HepG2 (cell line): ENCODE measurements at regions of chr6 and their contacts with region 1.

Region 1: GRCh38 chr6:27893059-27893835 is 18.9 kb downstream of the OR2B2 start:
- DNase-seq: peak; percentile 99
- ATAC-seq: peak; percentile 70
- H3K4me3 ChIP-seq: peak overlapping the region; percentile 76 to 85 (median 82)
- H3K27ac ChIP-seq: peak overlapping the region; percentile 96
- H3K4me1 ChIP-seq: peaks cover 45% of the 10 kb centered on the region
- H3K27me3 ChIP-seq: no peaks in the 10 kb centered on the region; a peak in 1 of 5 replicates
- CTCF ChIP-seq: peak; percentile 39; the same call in 1 of the 2 replicates
- EP300 ChIP-seq: peak; percentile 41 to 53; a peak in 2 of 4 replicates
- POLR2A ChIP-seq: peak; percentile 98 to 99
- RAD21 ChIP-seq: peak; percentile 52; the same call in 1 of the 2 replicates

Region 2: GRCh38 chr6:26196846-26197648 is 1696.2 kb before region 1 on chr6:
- CTCF ChIA-PET with region 1: no interaction called
- POLR2A ChIA-PET with region 1: interaction called, 7 read pairs
- in situ Hi-C with region 1: no loop called
- intact Hi-C with region 1: loop called (anchors 10 kb)
- DNase-seq: peak; percentile 93
- ATAC-seq: peak; percentile 66
- H3K4me3 ChIP-seq: peak overlapping the region; percentile 81 to 90 (median 87)
- H3K27ac ChIP-seq: peak overlapping the region; percentile 94
- H3K4me1 ChIP-seq: peaks cover 30% of the 10 kb centered on the region
- H3K27me3 ChIP-seq: no peaks in the 10 kb centered on the region; a peak in 1 of 5 replicates
- CTCF ChIP-seq: peak; percentile 60
- EP300 ChIP-seq: peak; percentile 34 to 41; a peak in 2 of 4 replicates
- POLR2A ChIP-seq: peak; percentile 99
- RAD21 ChIP-seq: peak; percentile 53

Region 3: DNA sequence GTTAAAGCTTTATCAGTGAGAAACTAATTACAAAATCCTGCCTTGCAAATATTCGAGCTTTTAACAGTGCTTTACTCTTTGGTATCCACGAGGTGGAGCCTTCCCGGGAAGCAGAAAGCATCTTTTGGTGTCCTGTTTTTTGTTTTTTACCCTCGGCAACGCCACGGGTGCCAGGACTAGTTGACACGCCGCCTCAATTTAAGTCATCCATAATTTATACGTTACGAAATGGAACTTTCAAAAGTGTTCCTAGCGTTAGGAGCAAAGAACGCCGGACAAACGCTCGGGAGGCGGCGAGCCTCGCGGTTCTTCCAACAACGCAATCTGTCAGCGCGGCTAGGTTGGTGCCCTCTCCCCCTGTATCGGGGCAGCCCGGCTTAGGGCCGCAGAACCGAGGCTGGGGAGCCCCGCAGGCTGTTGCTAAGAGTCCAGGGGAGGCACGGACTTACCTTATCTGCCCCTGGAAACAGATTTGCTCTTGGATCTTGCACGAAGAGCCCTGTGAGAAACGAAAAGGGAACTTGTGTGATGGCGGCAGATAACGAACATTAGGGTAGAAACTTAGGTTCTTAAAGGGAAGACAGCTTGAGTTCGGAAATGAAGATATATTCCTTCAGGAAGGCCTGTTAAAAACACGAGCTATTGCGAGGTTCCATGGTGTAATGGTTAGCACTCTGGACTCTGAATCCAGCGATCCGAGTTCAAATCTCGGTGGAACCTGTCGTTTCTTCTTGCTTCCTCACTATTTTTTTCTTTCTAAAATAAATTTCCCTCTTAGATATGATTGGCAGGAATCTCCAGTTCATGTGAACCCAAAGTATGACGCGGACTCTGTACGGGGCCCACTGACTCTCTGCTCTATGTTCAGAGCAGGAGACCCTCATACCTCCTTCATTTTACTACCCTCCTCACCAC is 374.1 kb before region 1 on chr6:
- CTCF ChIA-PET with region 1: no interaction called
- POLR2A ChIA-PET with region 1: interaction called, 3 read pairs
- in situ Hi-C with region 1: loop called (anchors 10 kb)
- intact Hi-C with region 1: loop called (anchors 2 kb)
- DNase-seq: peak; percentile 82
- ATAC-seq: peak; percentile 83
- H3K4me3 ChIP-seq: peak overlapping the region; percentile 72 to 86 (median 85)
- H3K27ac ChIP-seq: peak overlapping the region; percentile 39
- H3K4me1 ChIP-seq: peaks cover 19% of the 10 kb centered on the region
- H3K27me3 ChIP-seq: peaks cover 2 to 18% of the 10 kb centered on the region in 2 experiments; a peak in 1 of 5 replicates
- CTCF ChIP-seq: peak; percentile 73
- EP300 ChIP-seq: no peak
- POLR2A ChIP-seq: no peak
- RAD21 ChIP-seq: peak; percentile 43; the same call in 1 of the 2 replicates

Region 4: GRCh38 chr6:27795697-27796494 is 97.4 kb before region 1 on chr6:
- CTCF ChIA-PET with region 1: interaction called, 6 read pairs
- POLR2A ChIA-PET with region 1: interaction called, 10 read pairs
- in situ Hi-C with region 1: no loop called
- intact Hi-C with region 1: no loop called
- DNase-seq: peak; percentile 95
- ATAC-seq: peak; percentile 30
- H3K4me3 ChIP-seq: peak overlapping the region in 1 of 3 experiments; percentile 24; a peak in 1 of 6 replicates
- H3K27ac ChIP-seq: peak overlapping the region; percentile 34
- H3K4me1 ChIP-seq: peaks cover 48% of the 10 kb centered on the region
- H3K27me3 ChIP-seq: no peaks in the 10 kb centered on the region
- CTCF ChIP-seq: peak; percentile 84
- EP300 ChIP-seq: peak in 1 of 2 experiments; percentile 31; a peak in 1 of 4 replicates
- POLR2A ChIP-seq: no peak
- RAD21 ChIP-seq: peak; percentile 76

Region 5: DNA sequence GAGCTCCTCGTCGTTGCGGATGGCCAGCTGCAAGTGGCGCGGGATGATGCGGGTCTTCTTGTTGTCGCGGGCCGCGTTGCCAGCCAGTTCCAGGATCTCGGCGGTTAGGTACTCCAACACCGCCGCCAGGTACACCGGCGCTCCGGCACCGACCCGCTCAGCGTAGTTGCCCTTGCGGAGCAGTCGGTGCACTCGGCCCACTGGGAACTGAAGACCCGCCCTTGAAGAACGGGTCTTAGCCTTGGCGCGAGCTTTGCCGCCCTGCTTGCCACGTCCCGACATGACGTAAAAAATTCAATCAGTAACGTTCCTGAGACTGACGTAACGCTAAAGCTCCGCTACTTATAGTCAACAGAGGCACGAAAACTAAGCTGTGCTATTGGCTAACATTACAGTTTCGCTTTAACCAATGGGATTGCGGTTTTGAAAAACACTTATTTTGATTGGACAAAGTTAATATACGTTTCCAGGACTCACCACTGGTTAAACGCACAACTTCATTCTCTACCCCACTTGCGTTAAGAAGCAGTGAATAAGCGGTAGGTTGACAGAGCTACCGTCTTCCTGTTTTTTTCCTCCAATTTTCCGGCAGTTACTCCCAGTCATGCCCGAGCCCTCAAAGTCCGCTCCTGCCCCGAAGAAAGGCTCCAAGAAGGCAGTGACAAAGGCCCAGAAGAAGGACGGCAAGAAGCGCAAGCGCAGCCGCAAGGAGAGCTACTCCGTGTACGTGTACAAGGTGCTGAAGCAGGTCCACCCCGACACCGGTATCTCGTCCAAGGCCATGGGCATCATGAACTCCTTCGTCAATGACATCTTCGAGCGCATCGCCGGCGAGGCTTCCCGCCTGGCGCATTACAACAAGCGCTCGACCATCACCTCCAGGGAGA is 54.9 kb before region 1 on chr6:
- CTCF ChIA-PET with region 1: no interaction called
- POLR2A ChIA-PET with region 1: interaction called, 323 read pairs
- in situ Hi-C with region 1: loop called (anchors 5 kb)
- intact Hi-C with region 1: loop called (anchors 1 kb)
- DNase-seq: peak; percentile 100
- ATAC-seq: peak; percentile 87
- H3K4me3 ChIP-seq: peak overlapping the region; percentile 79 to 84 (median 83)
- H3K27ac ChIP-seq: peak overlapping the region; percentile 92
- H3K4me1 ChIP-seq: peaks cover 34% of the 10 kb centered on the region
- H3K27me3 ChIP-seq: no peaks in the 10 kb centered on the region; a peak in 1 of 5 replicates
- CTCF ChIP-seq: no peak
- EP300 ChIP-seq: 0 out of 4 replicates have a peak, but pooled peaks of 1 of the 2 experiments have one; percentile 6
- POLR2A ChIP-seq: peak; percentile 82 to 99
- RAD21 ChIP-seq: no peak; the same call in 1 of the 2 replicates

Region 6: GRCh38 chr6:27922949-27923348 is 29.7 kb after region 1 on chr6:
- CTCF ChIA-PET with region 1: no interaction called
- POLR2A ChIA-PET with region 1: no interaction called
- in situ Hi-C with region 1: no loop called
- intact Hi-C with region 1: no loop called
- DNase-seq: no peak
- ATAC-seq: no peak
- H3K4me3 ChIP-seq: no peak overlapping the region
- H3K27ac ChIP-seq: no peak overlapping the region
- H3K4me1 ChIP-seq: no peaks in the 10 kb centered on the region
- H3K27me3 ChIP-seq: no peaks in the 10 kb centered on the region
- CTCF ChIP-seq: no peak
- EP300 ChIP-seq: no peak
- POLR2A ChIP-seq: no peak
- RAD21 ChIP-seq: no peak

Region 7: GRCh38 chr6:27940766-27941165 is 47.5 kb after region 1 on chr6:
- CTCF ChIA-PET with region 1: no interaction called
- POLR2A ChIA-PET with region 1: no interaction called
- in situ Hi-C with region 1: no loop called
- intact Hi-C with region 1: no loop called
- DNase-seq: no peak
- ATAC-seq: no peak
- H3K4me3 ChIP-seq: no peak overlapping the region
- H3K27ac ChIP-seq: no peak overlapping the region
- H3K4me1 ChIP-seq: no peaks in the 10 kb centered on the region
- H3K27me3 ChIP-seq: no peaks in the 10 kb centered on the region
- CTCF ChIP-seq: no peak
- EP300 ChIP-seq: no peak
- POLR2A ChIP-seq: no peak
- RAD21 ChIP-seq: no peak

Region 8: GRCh38 chr6:28053584-28053983 is 160.3 kb after region 1 on chr6:
- CTCF ChIA-PET with region 1: no interaction called
- POLR2A ChIA-PET with region 1: no interaction called
- in situ Hi-C with region 1: no loop called
- intact Hi-C with region 1: no loop called
- DNase-seq: no peak
- ATAC-seq: no peak
- H3K4me3 ChIP-seq: no peak overlapping the region
- H3K27ac ChIP-seq: no peak overlapping the region
- H3K4me1 ChIP-seq: no peaks in the 10 kb centered on the region
- H3K27me3 ChIP-seq: peaks cover 0 to 7% of the 10 kb centered on the region in 2 experiments; a peak in 1 of 5 replicates
- CTCF ChIP-seq: no peak
- EP300 ChIP-seq: no peak
- POLR2A ChIP-seq: no peak
- RAD21 ChIP-seq: no peak

Region 9: DNA sequence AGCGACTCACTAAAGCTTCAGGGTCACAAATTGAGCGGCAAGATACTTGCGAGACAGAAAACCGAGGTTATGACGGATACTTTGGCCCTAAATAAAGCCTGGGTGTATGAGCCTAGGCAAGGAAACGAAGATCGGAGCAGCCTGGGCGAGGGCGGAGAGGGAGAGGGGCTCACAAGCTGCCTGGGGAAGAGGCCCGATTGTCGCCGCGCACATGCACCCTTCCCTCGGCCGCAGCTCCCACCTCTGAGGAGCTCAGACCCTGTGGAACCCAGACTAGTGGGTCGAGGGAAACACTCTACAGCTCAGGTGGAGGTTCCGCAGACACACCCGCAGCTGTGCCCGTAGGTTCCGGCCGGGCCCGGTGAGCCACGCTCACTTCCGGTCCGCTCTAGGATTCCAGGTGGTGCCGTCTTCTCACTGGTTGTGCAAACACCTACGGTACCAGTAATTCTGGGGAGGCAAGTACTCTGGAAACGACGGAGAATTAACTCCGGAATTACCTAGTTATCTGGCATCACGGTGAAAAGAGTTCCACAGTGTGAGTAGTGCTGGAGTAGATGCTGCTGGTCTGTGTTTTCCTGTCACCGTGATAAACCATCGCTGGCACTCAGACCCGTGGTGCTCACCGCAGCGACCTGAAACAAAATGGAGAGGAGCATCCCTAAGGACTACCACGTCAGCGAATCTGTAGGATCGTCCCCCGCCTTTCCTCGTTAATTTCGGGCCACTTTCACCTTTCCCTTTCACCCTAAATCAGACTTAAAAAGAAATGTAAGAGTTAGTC is 693.9 kb after region 1 on chr6:
- CTCF ChIA-PET with region 1: no interaction called
- POLR2A ChIA-PET with region 1: interaction called, 3 read pairs
- in situ Hi-C with region 1: no loop called
- intact Hi-C with region 1: loop called (anchors 5 kb)
- DNase-seq: peak; percentile 82
- ATAC-seq: peak; percentile 93
- H3K4me3 ChIP-seq: peak overlapping the region; percentile 74 to 86 (median 82)
- H3K27ac ChIP-seq: peak overlapping the region; percentile 62
- H3K4me1 ChIP-seq: peaks cover 50% of the 10 kb centered on the region
- H3K27me3 ChIP-seq: no peaks in the 10 kb centered on the region; a peak in 1 of 5 replicates
- CTCF ChIP-seq: peak; percentile 44; the same call in 1 of the 2 replicates
- EP300 ChIP-seq: peak in 1 of 2 experiments; percentile 35; a peak in 1 of 4 replicates
- POLR2A ChIP-seq: peak; percentile 86 to 98
- RAD21 ChIP-seq: peak; percentile 45; the same call in 1 of the 2 replicates